Prostate gland (tissue), 2 donors: ENCODE measurements at regions of chr4 and their contacts with region 1.

Region 1: DNA sequence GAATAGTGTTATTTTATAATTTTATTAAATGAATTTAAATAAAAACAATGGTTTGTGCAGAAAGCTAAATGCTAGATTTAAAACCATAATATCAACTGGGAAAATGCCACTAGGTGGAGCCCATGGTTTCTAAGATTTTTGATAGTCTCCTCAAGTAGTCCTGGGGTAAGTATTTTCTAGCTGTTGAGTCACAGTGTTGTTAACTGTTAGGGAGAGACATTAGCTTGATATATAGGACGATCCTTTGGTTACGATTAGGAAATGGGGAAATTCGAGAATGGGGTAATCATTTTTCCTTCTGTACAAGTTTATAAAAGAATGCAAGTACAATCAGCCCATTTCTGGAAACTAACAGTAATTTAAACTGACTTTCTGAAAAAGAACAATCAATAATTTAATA is 378.4 kb downstream of the ANKRD50 start:
- DNase-seq: peak; percentile 47
- H3K4me3 ChIP-seq: no peak overlapping the region
- H3K27ac ChIP-seq: no peak overlapping the region
- H3K4me1 ChIP-seq: no peaks in the 10 kb centered on the region
- H3K27me3 ChIP-seq: no peaks in the 10 kb centered on the region
- CTCF ChIP-seq: peak in 3 of 4 experiments; percentile 51 to 75 (median 75)
- POLR2A ChIP-seq: no peak

Region 2: DNA sequence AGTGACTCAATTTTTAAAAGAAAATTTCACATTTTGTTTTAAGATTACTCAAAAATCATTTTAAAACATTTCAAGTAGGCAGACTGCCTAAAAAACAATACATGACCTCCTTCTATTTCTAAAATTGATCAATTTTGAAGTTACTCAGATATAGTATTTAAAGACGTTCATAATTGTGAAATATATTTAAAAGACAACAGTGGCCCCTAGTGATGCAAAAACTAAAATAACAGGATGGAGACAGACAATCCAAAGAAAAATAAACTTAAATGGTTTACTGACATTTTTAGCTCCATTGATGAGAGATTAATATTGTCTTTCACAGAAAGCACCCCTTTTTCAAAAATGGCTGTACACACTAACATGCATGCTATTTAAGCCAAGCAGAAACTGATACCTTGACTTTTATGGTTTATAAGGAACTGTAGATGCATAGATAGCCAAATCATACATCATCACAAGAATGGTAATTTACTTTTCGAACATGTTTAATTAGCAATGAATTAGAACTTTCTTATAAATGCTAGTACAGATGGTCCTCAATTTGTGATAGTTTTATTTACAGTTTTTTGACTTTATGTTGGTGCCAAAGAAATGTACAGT is 910.8 kb after region 1 on chr4:
- intact Hi-C with region 1: loop called (anchors 5 kb)
- DNase-seq: no peak
- H3K4me3 ChIP-seq: no peak overlapping the region
- H3K27ac ChIP-seq: no peak overlapping the region
- H3K4me1 ChIP-seq: no peaks in the 10 kb centered on the region
- H3K27me3 ChIP-seq: no peaks in the 10 kb centered on the region
- CTCF ChIP-seq: peak in 3 of 4 experiments; percentile 49 to 54 (median 50)
- POLR2A ChIP-seq: no peak

Region 3: GRCh38 chr4:125283707-125284279 is 949.7 kb after region 1 on chr4:
- intact Hi-C with region 1: loop called (anchors 5 kb)
- DNase-seq: no peak
- H3K4me3 ChIP-seq: no peak overlapping the region
- H3K27ac ChIP-seq: no peak overlapping the region
- H3K4me1 ChIP-seq: no peaks in the 10 kb centered on the region
- H3K27me3 ChIP-seq: no peaks in the 10 kb centered on the region
- CTCF ChIP-seq: peak; percentile 38 to 61 (median 58)
- POLR2A ChIP-seq: no peak